B cell (primary cell): ENCODE measurements at regions of chr17 and their contacts with region 1.

Region 1: DNA sequence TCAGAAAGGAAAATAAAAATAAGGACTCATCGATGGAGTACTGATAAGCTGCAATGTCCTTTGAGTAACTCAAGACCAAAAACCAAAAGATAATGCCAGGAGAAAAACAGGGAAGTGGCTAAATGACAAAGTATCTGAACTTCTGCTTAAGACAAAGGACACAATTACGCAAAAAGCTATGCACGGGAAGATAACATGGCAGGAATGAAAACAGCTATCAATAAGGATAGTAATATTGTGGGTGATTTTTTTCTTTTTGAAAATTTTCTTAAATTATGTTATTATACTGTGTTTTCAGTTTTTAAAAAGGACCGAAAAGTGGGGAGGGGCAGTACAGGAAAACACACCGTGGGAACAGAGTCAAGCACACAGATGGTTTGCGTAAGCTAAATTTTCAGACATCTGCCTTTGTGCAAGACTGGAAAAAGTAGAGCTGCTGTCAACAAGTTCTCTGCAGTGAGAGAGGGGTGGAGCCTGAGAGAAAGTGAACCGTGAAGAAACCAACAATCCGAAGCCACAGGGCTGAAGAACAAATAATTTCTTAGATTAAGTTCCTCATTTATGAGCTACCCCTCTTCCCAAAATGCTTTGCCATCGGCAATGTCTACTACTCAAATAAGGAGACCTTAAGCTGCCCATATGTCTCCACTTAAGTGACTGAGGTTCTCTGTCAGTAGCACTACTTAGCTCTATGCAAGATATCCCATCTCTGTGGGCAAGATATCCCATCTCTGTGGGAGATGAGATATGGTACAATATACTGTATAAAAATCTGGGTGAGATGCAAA is 99.9 kb upstream of the CORO6 start:
- DNase-seq: peak; percentile 93
- ATAC-seq: peak; percentile 83
- H3K4me3 ChIP-seq: peak overlapping the region in 4 of 5 experiments; percentile 31 to 44 (median 37)
- H3K4me3 Mint-ChIP-seq: peak overlapping the region; percentile 78
- H3K27ac ChIP-seq: peak overlapping the region; percentile 81 to 94
- H3K27ac Mint-ChIP-seq: peak overlapping the region; percentile 91
- H3K4me1 ChIP-seq: peaks cover 91% of the 10 kb centered on the region in 2 donors
- H3K4me1 Mint-ChIP-seq: peaks cover 85% of the 10 kb centered on the region
- H3K27me3 ChIP-seq: no peaks in the 10 kb centered on the region
- H3K27me3 Mint-ChIP-seq: no peaks in the 10 kb centered on the region
- CTCF ChIP-seq: no peak

Region 2: GRCh38 chr17:29568331-29569244 is 154.0 kb before region 1 on chr17 and contains the start of gene TP53I13:
- CTCF ChIA-PET with region 1: interaction called, 3 read pairs
- POLR2A ChIA-PET with region 1: no interaction called
- intact Hi-C with region 1: loop called (anchors 5 kb)
- DNase-seq: peak; percentile 92
- ATAC-seq: peak; percentile 60
- H3K4me3 ChIP-seq: peak within 1 kb of the TSS; percentile 71 to 99 (median 80)
- H3K4me3 Mint-ChIP-seq: peak within 1 kb of the TSS; percentile 99
- H3K27ac ChIP-seq: peak within 1 kb of the TSS; percentile 71 to 76
- H3K27ac Mint-ChIP-seq: peak within 1 kb of the TSS; percentile 97
- H3K4me1 ChIP-seq: peaks cover 27 to 40% of the 10 kb centered on the region in 2 donors
- H3K4me1 Mint-ChIP-seq: peaks cover 39% of the 10 kb centered on the region
- H3K27me3 ChIP-seq: no peaks in the 10 kb centered on the region
- H3K27me3 Mint-ChIP-seq: no peaks in the 10 kb centered on the region
- CTCF ChIP-seq: no peak
- total RNA-seq, gene TP53I13: 220 and 224 TPM in 2 replicates

Region 3: DNA sequence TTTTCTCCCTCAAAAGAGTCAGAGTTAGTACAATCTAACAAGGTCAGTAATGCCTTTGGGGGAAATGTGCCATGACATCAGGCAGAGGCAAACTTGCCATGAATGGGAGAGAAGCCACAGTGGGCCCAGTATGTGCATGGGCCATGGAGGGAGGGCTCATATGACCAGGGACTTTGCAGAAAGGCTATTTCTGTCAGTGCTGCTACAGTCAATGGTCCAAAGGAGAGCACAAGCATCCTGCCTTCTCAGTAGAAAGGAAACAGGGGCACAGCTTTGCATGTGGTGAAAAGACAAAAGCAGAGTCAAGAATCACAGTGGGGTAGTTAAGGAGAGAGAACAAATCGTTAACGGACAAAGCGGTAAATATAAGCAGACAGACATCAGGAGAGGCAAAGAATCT is 88.7 kb before region 1 on chr17:
- CTCF ChIA-PET with region 1: no interaction called
- POLR2A ChIA-PET with region 1: interaction called, 10 read pairs
- intact Hi-C with region 1: no loop called
- DNase-seq: no peak
- ATAC-seq: no peak
- H3K4me3 ChIP-seq: no peak overlapping the region
- H3K4me3 Mint-ChIP-seq: no peak overlapping the region
- H3K27ac ChIP-seq: no peak overlapping the region
- H3K27ac Mint-ChIP-seq: no peak overlapping the region
- H3K4me1 ChIP-seq: peaks cover under 1 to 6% of the 10 kb centered on the region in 2 donors
- H3K4me1 Mint-ChIP-seq: peaks cover 9% of the 10 kb centered on the region
- H3K27me3 ChIP-seq: no peaks in the 10 kb centered on the region
- H3K27me3 Mint-ChIP-seq: no peaks in the 10 kb centered on the region
- CTCF ChIP-seq: no peak

Region 4: DNA sequence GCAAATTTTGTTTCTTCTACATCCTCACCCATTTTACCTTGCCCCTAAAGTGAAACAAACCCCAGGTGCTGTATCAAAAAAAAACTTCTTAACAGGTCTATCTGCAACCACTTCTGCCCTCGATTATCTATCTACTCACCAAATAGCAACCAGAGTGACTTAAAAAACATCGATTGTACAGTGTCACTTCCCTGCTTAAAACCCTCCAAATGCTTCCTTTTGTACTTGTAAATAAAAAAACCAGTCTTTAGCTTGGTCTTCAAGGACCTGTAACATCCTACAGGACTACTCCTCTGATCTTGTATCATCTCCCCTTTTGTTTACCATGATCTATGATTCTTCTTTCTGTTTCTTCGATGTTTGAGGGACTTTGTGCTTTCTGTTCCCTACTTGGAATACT is 17.2 kb before region 1 on chr17:
- CTCF ChIA-PET with region 1: interaction called, 34 read pairs
- POLR2A ChIA-PET with region 1: interaction called, 54 read pairs
- intact Hi-C with region 1: loop called (anchors 1 kb)
- DNase-seq: peak; percentile 48
- ATAC-seq: no peak
- H3K4me3 ChIP-seq: peak overlapping the region in 3 of 5 experiments; percentile 11 to 15 (median 11)
- H3K4me3 Mint-ChIP-seq: peak overlapping the region; percentile 59
- H3K27ac ChIP-seq: peak overlapping the region; percentile 94 to 97
- H3K27ac Mint-ChIP-seq: peak overlapping the region; percentile 90
- H3K4me1 ChIP-seq: peaks cover 49 to 62% of the 10 kb centered on the region in 2 donors
- H3K4me1 Mint-ChIP-seq: peaks cover 56% of the 10 kb centered on the region
- H3K27me3 ChIP-seq: no peaks in the 10 kb centered on the region
- H3K27me3 Mint-ChIP-seq: no peaks in the 10 kb centered on the region
- CTCF ChIP-seq: no peak

Region 5: DNA sequence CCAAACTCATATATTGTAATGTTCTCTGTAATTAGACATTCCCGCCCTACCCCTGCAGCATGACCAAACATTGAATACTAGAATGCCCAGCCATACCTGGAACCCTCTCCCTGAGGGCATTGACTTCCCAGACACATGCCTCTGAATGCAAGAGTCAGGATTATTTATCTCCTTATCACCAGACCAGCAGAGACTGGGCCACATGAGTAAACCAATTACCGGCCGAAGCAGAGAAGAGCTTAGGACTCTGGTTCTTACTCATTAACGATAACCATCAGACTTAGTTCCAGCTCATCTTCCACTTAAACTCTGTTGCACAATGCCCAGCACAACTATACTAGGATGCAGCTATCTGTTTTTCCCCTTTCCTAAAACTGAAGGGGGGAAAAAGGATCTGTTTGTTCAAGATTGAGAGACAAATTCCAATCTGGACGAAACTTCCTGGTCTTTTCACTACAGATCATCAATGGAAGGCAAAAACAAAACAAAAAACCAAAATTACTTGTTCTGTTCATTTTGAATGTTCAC is 11.7 kb before region 1 on chr17:
- CTCF ChIA-PET with region 1: interaction called, 34 read pairs
- POLR2A ChIA-PET with region 1: interaction called, 54 read pairs
- intact Hi-C with region 1: loop called (anchors 1 kb)
- DNase-seq: no peak
- ATAC-seq: no peak
- H3K4me3 ChIP-seq: no peak overlapping the region
- H3K4me3 Mint-ChIP-seq: peak overlapping the region; percentile 8
- H3K27ac ChIP-seq: peak overlapping the region; percentile 15 to 31
- H3K27ac Mint-ChIP-seq: peak overlapping the region; percentile 39
- H3K4me1 ChIP-seq: peaks cover 52 to 72% of the 10 kb centered on the region in 2 donors
- H3K4me1 Mint-ChIP-seq: peaks cover 81% of the 10 kb centered on the region
- H3K27me3 ChIP-seq: no peaks in the 10 kb centered on the region
- H3K27me3 Mint-ChIP-seq: no peaks in the 10 kb centered on the region
- CTCF ChIP-seq: no peak

Region 6: DNA sequence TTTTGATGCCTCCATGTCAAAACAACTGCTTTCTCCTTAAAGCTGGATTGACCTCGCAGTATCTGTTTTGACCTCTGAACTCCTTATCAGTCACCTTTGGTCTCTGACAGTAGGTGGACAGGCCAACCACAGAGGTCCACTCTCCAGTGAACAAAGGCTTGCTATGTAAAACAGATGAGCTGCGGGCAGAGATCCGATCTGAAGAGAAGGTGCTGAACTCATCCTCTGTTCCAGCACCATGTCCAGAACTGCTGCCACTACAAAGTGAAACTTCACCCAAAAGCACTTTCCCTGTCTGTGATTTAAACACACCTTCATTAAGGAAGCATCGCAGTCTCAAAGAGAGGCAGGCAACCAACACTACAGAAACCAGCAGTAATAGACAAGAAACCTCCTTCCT is 17.4 kb after region 1 on chr17:
- CTCF ChIA-PET with region 1: interaction called, 5 read pairs
- POLR2A ChIA-PET with region 1: interaction called, 8 read pairs
- intact Hi-C with region 1: loop called (anchors 2 kb)
- DNase-seq: no peak
- ATAC-seq: no peak
- H3K4me3 ChIP-seq: no peak overlapping the region
- H3K4me3 Mint-ChIP-seq: peak overlapping the region; percentile 3
- H3K27ac ChIP-seq: peak overlapping the region in 1 of 2 donors; percentile 71
- H3K27ac Mint-ChIP-seq: peak overlapping the region; percentile 62
- H3K4me1 ChIP-seq: peaks cover 36 to 37% of the 10 kb centered on the region in 2 donors
- H3K4me1 Mint-ChIP-seq: peaks cover 54% of the 10 kb centered on the region
- H3K27me3 ChIP-seq: no peaks in the 10 kb centered on the region
- H3K27me3 Mint-ChIP-seq: no peaks in the 10 kb centered on the region
- CTCF ChIP-seq: no peak

Region 7: GRCh38 chr17:29769225-29769624 is 46.6 kb after region 1 on chr17:
- CTCF ChIA-PET with region 1: no interaction called
- POLR2A ChIA-PET with region 1: no interaction called
- intact Hi-C with region 1: no loop called
- DNase-seq: no peak
- ATAC-seq: no peak
- H3K4me3 ChIP-seq: no peak overlapping the region
- H3K4me3 Mint-ChIP-seq: no peak overlapping the region
- H3K27ac ChIP-seq: no peak overlapping the region
- H3K27ac Mint-ChIP-seq: no peak overlapping the region
- H3K4me1 ChIP-seq: peaks cover 14 to 18% of the 10 kb centered on the region in 2 donors
- H3K4me1 Mint-ChIP-seq: peaks cover 19% of the 10 kb centered on the region
- H3K27me3 ChIP-seq: no peaks in the 10 kb centered on the region
- H3K27me3 Mint-ChIP-seq: no peaks in the 10 kb centered on the region
- CTCF ChIP-seq: no peak

Region 8: GRCh38 chr17:29793519-29793918 is 70.9 kb after region 1 on chr17:
- CTCF ChIA-PET with region 1: no interaction called
- POLR2A ChIA-PET with region 1: no interaction called
- intact Hi-C with region 1: no loop called
- DNase-seq: no peak
- ATAC-seq: no peak
- H3K4me3 ChIP-seq: no peak overlapping the region
- H3K4me3 Mint-ChIP-seq: no peak overlapping the region
- H3K27ac ChIP-seq: no peak overlapping the region
- H3K27ac Mint-ChIP-seq: no peak overlapping the region
- H3K4me1 ChIP-seq: peaks cover 3 to 8% of the 10 kb centered on the region in 2 donors
- H3K4me1 Mint-ChIP-seq: peaks cover 10% of the 10 kb centered on the region
- H3K27me3 ChIP-seq: no peaks in the 10 kb centered on the region
- H3K27me3 Mint-ChIP-seq: no peaks in the 10 kb centered on the region
- CTCF ChIP-seq: no peak

Region 9: DNA sequence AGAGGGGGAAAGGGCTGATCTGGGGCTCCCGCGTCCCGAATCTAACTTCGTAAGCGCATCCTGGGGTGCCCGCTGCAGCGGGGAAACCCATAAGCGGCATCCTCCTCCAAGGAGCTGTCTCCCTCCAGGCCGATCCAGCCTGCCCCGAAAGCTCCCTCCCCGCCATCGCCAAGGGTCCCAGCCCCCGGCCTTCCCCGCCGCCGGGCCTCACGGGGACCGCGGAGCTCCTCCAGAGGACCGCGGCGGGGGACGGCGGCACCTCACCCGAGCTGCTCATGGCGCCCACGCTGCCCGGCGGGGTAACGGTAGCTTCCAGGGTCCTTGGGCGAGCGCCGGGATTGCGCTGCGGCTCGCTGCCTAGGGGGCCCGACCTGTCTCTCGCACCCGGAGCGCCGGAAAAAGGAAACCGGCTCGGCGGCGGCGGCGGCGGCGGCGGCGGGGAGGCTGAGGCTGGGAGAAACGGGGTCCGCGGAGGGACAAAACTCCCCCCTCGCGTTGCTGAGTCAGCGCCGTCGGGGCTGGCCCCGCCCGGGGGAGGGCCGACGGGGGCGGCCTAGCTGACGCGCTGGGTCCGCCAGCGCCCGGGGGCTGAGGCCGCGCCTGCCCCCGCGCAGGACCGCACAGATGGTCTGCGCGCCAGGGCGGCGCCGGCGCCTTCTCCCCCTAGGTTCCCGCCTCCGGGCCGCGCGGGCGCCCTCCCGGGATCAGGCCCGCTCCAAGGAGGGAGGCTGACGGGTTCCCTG is 569.1 kb after region 1 on chr17 and contains the start of gene BLMH:
- CTCF ChIA-PET with region 1: no interaction called
- POLR2A ChIA-PET with region 1: interaction called, 10 read pairs
- intact Hi-C with region 1: no loop called
- DNase-seq: peak; percentile 83
- ATAC-seq: peak; percentile 94
- H3K4me3 ChIP-seq: peak within 1 kb of the TSS; percentile 70 to 87 (median 80)
- H3K4me3 Mint-ChIP-seq: peak within 1 kb of the TSS; percentile 96
- H3K27ac ChIP-seq: peak within 1 kb of the TSS in 1 of 2 donors; percentile 47
- H3K27ac Mint-ChIP-seq: peak within 1 kb of the TSS; percentile 78
- H3K4me1 ChIP-seq: peaks cover 12 to 16% of the 10 kb centered on the region in 2 donors
- H3K4me1 Mint-ChIP-seq: peaks cover 10% of the 10 kb centered on the region
- H3K27me3 ChIP-seq: peaks cover 0 to 4% (median 0%) of the 10 kb centered on the region in 4 experiments
- H3K27me3 Mint-ChIP-seq: no peaks in the 10 kb centered on the region
- CTCF ChIP-seq: no peak
- total RNA-seq, gene BLMH: 25.9 and 27.9 TPM in 2 replicates